ENCODE measurements at regions of chr4 and their contacts with region 1.

Region 1: GRCh38 chr4:121869841-121870656 is at the start of gene BBS7:
- DNase-seq: peak; percentile 88 to 97
- ATAC-seq: peak; percentile 97 to 99 (median 98)
- H3K4me3 ChIP-seq: peak within 1 kb of the TSS; percentile 91
- H3K4me3 Mint-ChIP-seq: peak within 1 kb of the TSS; percentile 97
- H3K27ac ChIP-seq: peak within 1 kb of the TSS; percentile 77
- H3K27ac Mint-ChIP-seq: peak within 1 kb of the TSS; percentile 83 to 93
- H3K4me1 ChIP-seq: peaks cover 8% of the 10 kb centered on the region
- H3K4me1 Mint-ChIP-seq: peaks cover 14 to 18% of the 10 kb centered on the region in 2 donors
- H3K27me3 ChIP-seq: no peaks in the 10 kb centered on the region
- H3K27me3 Mint-ChIP-seq: peaks cover 7 to 24% of the 10 kb centered on the region in 2 donors
- CTCF ChIP-seq: no peak
- total RNA-seq, gene BBS7: 3.6 to 7.5 (median 4.9) TPM

Region 2: DNA sequence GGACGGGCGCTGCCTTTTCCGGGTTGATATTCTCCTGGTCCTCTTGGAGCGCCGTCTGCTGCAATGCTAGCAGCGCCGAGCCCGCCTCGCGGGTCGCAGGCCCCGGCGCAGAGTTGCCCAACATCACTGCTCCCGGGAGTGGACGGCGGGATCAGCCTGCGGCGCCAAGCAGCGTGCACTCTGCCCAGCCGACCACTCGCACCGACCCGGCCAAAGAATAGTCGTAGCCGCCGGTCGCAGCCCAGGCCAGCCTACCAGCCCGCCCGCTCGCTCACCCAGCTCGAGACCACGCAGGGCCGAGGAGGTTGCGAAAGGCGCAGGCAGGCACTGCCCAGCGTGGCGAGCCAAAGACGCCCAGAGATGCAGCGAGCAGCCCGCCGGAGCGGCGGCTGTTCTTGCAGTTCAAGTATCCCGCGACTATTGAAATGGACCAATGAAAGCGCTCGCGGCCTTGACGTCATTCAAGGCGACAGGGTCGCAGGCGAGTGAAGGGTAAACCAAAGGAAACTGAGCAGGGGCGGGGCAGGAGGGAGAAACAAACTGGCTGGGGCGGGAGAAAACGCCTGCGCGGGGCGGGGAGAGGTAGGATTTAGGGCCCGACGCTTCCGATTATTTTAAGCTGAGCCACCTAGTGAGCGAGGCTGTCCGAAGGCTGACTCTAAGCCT is 46.4 kb before region 1 on chr4 and contains the start of gene CCNA2:
- intact Hi-C with region 1: loop called (anchors 2 kb)
- DNase-seq: peak; percentile 93 to 96
- ATAC-seq: peak; percentile 98 to 99 (median 98)
- H3K4me3 ChIP-seq: peak within 1 kb of the TSS; percentile 67
- H3K4me3 Mint-ChIP-seq: peak within 1 kb of the TSS; percentile 91
- H3K27ac ChIP-seq: peak within 1 kb of the TSS; percentile 74
- H3K27ac Mint-ChIP-seq: peak within 1 kb of the TSS; percentile 86 to 87
- H3K4me1 ChIP-seq: peaks cover 9% of the 10 kb centered on the region
- H3K4me1 Mint-ChIP-seq: peaks cover 13 to 15% of the 10 kb centered on the region in 2 donors
- H3K27me3 ChIP-seq: no peaks in the 10 kb centered on the region
- H3K27me3 Mint-ChIP-seq: no peaks in the 10 kb centered on the region
- CTCF ChIP-seq: no peak
- total RNA-seq, gene CCNA2: 0.50 to 1.6 (median 0.99) TPM

Region 3: DNA sequence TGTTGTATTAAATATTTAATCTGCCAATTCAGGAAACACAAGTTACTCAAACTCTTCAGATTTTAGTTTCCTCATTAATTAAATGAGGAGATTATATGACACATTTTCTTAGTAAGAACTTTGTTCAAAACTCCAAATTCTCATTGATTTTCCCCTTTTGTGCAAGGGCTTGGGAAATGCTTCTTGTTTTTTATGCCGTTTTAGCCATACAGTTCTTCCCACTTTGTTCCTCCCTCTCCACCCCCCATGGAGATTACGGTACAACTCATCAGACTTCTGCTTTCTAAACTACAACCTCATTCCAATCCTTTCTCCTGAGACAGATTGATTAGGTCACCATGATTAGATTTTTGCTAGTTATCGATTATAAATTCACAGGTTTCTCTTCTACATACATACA is 11.1 kb after region 1 on chr4:
- intact Hi-C with region 1: no loop called
- DNase-seq: no peak
- ATAC-seq: no peak
- H3K4me3 ChIP-seq: no peak overlapping the region
- H3K4me3 Mint-ChIP-seq: no peak overlapping the region
- H3K27ac ChIP-seq: no peak overlapping the region
- H3K27ac Mint-ChIP-seq: no peak overlapping the region
- H3K4me1 ChIP-seq: no peaks in the 10 kb centered on the region
- H3K4me1 Mint-ChIP-seq: no peaks in the 10 kb centered on the region
- H3K27me3 ChIP-seq: peaks cover 8% of the 10 kb centered on the region
- H3K27me3 Mint-ChIP-seq: peaks cover 41 to 85% of the 10 kb centered on the region in 2 donors
- CTCF ChIP-seq: no peak